ENCODE measurements at regions of chr11 and their contacts with region 1.

Region 1: GRCh38 chr11:87037450-87038234 is at the start of gene TMEM135:
- DNase-seq: peak; percentile 97
- H3K4me3 Mint-ChIP-seq: peak within 1 kb of the TSS; percentile 91
- H3K27ac Mint-ChIP-seq: peak within 1 kb of the TSS; percentile 87
- H3K4me1 Mint-ChIP-seq: peaks cover 32% of the 10 kb centered on the region
- H3K27me3 Mint-ChIP-seq: no peaks in the 10 kb centered on the region
- total RNA-seq, gene TMEM135: 16.7 to 27.5 TPM

Region 2: GRCh38 chr11:86955361-86956120 is 82.1 kb before region 1 on chr11 and contains the start of gene FZD4:
- CTCF ChIA-PET with region 1: no interaction called
- POLR2A ChIA-PET with region 1: no interaction called
- intact Hi-C with region 1: loop called (anchors 2 kb)
- DNase-seq: peak; percentile 71
- H3K4me3 Mint-ChIP-seq: peak within 1 kb of the TSS; percentile 77
- H3K27ac Mint-ChIP-seq: no peak within 1 kb of the TSS
- H3K4me1 Mint-ChIP-seq: peaks cover 9% of the 10 kb centered on the region
- H3K27me3 Mint-ChIP-seq: peaks cover 34% of the 10 kb centered on the region
- total RNA-seq, gene FZD4: 0.33 to 0.36 TPM

Region 3: GRCh38 chr11:87081358-87081757 is 43.7 kb after region 1 on chr11:
- CTCF ChIA-PET with region 1: no interaction called
- POLR2A ChIA-PET with region 1: interaction called, 5 read pairs
- intact Hi-C with region 1: loop called (anchors 1 kb)
- DNase-seq: no peak
- H3K4me3 Mint-ChIP-seq: peak overlapping the region; percentile 67
- H3K27ac Mint-ChIP-seq: peak overlapping the region; percentile 74
- H3K4me1 Mint-ChIP-seq: peaks cover 21% of the 10 kb centered on the region
- H3K27me3 Mint-ChIP-seq: no peaks in the 10 kb centered on the region

Region 4: GRCh38 chr11:87219266-87219665 is 181.6 kb after region 1 on chr11:
- CTCF ChIA-PET with region 1: no interaction called
- POLR2A ChIA-PET with region 1: no interaction called
- intact Hi-C with region 1: no loop called
- DNase-seq: peak; percentile 17
- H3K4me3 Mint-ChIP-seq: no peak overlapping the region
- H3K27ac Mint-ChIP-seq: no peak overlapping the region
- H3K4me1 Mint-ChIP-seq: peaks cover 5% of the 10 kb centered on the region
- H3K27me3 Mint-ChIP-seq: no peaks in the 10 kb centered on the region

Region 5: GRCh38 chr11:87252869-87253268 is 215.2 kb after region 1 on chr11:
- CTCF ChIA-PET with region 1: no interaction called
- POLR2A ChIA-PET with region 1: interaction called, 3 read pairs
- intact Hi-C with region 1: loop called (anchors 1 kb)
- DNase-seq: no peak
- H3K4me3 Mint-ChIP-seq: no peak overlapping the region
- H3K27ac Mint-ChIP-seq: no peak overlapping the region
- H3K4me1 Mint-ChIP-seq: peaks cover 13% of the 10 kb centered on the region
- H3K27me3 Mint-ChIP-seq: no peaks in the 10 kb centered on the region

Measured in activated CD4-positive, alpha-beta memory T cell treated with anti-CD3 and anti-CD28 coated beads for 36 hours (primary cell).